Activated naive CD4-positive, alpha-beta T cell treated with anti-CD3 and anti-CD28 coated beads, Interleukin-2, amount 10 ng/mL, durations not matched to agents 7 days and 5 days (primary cell): ENCODE measurements at regions of chr6 and their contacts with region 1.

Region 1: GRCh38 chr6:127302728-127303660 is 36.3 kb downstream of the RNF146 start:
- DNase-seq: peak; percentile 61
- H3K4me3 Mint-ChIP-seq: no peak overlapping the region
- H3K27ac Mint-ChIP-seq: no peak overlapping the region
- H3K4me1 Mint-ChIP-seq: peaks cover 6% of the 10 kb centered on the region
- H3K27me3 Mint-ChIP-seq: no peaks in the 10 kb centered on the region

Region 2: DNA sequence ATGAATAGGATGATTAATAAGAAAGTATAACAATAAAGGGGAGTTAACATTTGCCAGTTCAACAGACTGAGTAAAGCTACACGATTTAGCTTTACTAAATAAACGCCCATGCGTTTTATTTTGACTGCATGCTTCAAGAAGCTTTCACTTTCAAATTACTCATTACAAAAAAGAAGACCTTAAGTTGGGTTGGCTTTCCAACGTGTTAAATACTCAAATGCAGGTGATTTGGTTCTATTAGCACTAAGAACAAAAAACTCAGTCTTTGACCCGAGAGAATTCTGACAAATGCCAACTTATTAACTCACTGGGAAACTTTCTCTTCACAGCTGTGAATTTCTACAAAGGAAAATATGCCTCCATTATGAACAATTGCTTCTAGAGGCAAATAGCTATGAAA is 11.5 kb before region 1 on chr6:
- CTCF ChIA-PET with region 1: interaction called, 10 read pairs
- DNase-seq: no peak
- H3K4me3 Mint-ChIP-seq: no peak overlapping the region
- H3K27ac Mint-ChIP-seq: no peak overlapping the region
- H3K4me1 Mint-ChIP-seq: peaks cover 20% of the 10 kb centered on the region
- H3K27me3 Mint-ChIP-seq: no peaks in the 10 kb centered on the region

Region 3: DNA sequence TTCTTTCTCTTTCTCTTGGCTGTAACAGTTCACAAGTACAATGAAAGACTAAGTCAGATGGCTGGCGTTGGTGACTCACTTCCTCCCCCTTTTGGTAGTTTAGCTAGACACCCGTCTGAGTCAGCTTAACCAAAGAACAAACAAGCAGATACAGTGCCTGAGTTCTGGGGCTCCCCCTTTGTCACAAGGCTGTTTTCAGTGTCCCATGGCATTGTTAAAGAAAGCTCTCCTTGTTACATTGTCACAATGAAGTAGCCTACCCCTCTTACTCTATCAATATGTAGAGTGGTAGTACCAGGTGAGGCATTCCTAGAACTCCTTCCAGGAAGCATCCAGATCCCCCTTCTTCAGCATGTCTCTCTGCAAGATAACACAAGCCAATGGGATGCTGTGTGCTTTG is 117.6 kb after region 1 on chr6:
- CTCF ChIA-PET with region 1: interaction called, 32 read pairs
- DNase-seq: peak; percentile 79
- H3K4me3 Mint-ChIP-seq: no peak overlapping the region
- H3K27ac Mint-ChIP-seq: no peak overlapping the region
- H3K4me1 Mint-ChIP-seq: peaks cover 11% of the 10 kb centered on the region
- H3K27me3 Mint-ChIP-seq: no peaks in the 10 kb centered on the region